ENCODE measurements at regions of chr2 and their contacts with region 1.

Region 1: DNA sequence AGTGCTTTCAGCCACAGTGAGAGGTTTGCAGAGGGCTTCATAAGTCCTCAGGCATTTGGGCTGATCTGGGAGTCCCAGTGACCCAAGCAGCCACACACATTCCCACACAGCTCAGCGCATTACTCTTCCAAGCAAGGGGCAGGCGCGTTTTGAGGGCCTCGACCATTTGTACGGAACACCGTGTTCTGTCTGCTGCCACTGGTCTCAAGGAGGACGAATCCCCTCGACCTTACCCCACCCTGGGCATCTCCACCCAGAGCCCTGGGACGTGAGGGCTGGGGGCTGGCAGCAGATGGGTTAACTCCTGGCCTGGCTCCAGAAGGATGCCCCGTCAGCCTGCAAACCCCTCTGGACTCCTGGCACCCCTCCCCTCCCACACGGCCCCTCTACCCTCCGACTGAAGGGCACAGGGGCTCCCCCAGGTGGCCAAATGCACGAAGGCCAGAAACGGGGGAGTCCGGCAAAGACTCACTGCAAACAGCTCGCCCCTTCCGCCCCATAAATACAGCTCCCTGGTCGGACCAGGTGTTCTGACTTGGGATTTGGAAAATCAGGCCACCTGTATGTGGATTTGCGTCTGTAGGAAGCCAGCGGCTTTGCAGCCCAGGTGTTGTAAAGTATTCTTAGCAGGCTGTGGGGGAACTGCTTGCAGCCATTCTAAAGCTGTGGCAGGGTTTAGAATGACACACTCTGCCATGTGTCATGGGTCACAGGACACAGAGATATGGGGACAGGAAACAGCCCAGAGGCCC is 33.6 kb upstream of the PTMA start:
- DNase-seq: peak; percentile 61 to 74 (median 71)
- ATAC-seq: peak; percentile 69
- H3K4me3 ChIP-seq: no peak overlapping the region
- H3K27ac ChIP-seq: peak overlapping the region in 2 of 4 donors; percentile 16 to 58
- H3K4me1 ChIP-seq: peaks cover 11% of the 10 kb centered on the region
- H3K27me3 ChIP-seq: no peaks in the 10 kb centered on the region
- CTCF ChIP-seq: peak; percentile 73 to 90 (median 77)
- POLR2A ChIP-seq: no peak

Region 2: GRCh38 chr2:231124838-231125568 is 549.8 kb before region 1 on chr2 and contains the start of gene HTR2B:
- intact Hi-C with region 1: no loop called
- DNase-seq: no peak
- ATAC-seq: no peak
- H3K4me3 ChIP-seq: no peak within 1 kb of the TSS
- H3K27ac ChIP-seq: no peak within 1 kb of the TSS
- H3K4me1 ChIP-seq: peaks cover 15% of the 10 kb centered on the region
- H3K27me3 ChIP-seq: no peaks in the 10 kb centered on the region
- CTCF ChIP-seq: no peak
- POLR2A ChIP-seq: no peak
- total RNA-seq, gene HTR2B: not detected

Region 3: DNA sequence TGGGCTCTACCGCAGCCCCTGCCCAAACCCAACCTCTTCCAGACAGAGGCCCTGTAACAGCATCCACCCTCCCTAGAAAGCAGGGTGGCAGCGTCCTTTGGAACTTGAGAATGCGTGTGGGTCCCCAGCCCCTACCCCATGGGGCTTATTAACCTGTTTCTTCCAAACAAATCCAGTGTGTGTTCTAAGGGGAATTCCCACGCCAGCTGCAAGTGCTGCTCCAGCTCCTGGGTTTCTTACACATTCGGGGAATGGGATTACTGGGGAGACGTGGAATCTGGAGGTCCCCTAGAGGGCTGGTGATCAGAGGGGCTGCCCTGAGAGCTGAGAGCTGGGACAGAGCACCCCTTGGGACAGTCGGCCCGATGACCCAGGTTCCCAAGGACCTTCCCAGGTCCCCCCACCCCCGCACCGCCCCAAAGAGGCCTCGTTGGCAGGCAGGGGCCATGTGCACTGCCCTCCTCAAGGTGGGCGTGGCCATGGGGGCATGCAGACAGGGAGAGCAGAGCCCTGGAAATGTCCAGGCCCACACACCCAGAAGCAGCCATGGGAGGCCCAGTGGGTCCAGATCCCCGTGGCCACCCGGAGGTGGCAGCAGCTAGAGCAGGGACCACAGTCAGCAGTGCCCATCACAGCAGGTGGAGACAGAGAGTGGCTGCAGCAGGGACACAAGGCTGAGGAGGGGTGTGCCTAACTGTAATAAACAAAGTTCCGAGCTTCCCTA is 100.9 kb before region 1 on chr2:
- intact Hi-C with region 1: no loop called
- DNase-seq: no peak
- ATAC-seq: no peak
- H3K4me3 ChIP-seq: no peak overlapping the region
- H3K27ac ChIP-seq: no peak overlapping the region
- H3K4me1 ChIP-seq: no peaks in the 10 kb centered on the region
- H3K27me3 ChIP-seq: no peaks in the 10 kb centered on the region
- CTCF ChIP-seq: no peak
- POLR2A ChIP-seq: no peak

Region 4: DNA sequence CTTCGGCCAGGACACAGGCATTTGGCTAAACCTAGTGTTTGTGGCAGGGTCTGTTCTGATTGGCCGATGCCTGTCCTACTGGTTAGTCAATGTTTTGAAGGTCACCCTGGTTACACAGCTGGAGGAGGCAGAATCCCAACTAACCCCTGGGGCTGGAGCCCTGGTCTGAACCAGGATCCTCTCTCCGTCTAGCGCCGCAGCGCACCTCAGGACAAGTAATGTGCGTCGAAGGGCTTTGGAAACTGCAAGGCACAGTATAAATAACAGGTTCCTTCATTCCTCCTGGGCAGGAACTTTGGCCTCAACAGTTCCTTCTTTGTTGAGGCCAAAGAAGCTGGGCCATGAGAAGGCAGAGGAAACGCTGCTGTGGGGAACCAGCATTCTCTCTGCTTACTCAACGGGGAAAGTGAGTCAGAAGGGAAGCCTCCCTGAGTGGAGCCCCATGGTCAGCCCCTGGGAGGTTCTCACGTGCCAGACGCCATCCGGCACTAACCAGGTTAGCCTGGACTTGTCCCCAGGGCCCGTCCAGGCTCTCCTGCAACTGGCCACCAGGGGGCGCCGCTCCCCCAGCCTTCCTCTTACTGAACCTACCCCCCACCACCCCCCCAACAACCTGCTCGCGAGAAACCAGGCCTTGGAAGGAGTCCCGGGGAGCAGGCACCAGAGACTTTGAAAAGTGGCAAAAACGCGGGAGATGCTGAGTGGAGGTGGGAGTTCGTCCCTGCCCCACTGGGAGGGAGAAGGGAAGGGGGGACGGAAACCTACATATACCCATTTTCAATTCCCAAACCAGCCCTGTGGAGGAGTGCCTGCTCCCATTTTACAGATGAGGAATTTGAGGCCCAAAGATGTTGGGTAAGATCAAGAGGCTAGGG is 62.3 kb before region 1 on chr2:
- intact Hi-C with region 1: loop called (anchors 10 kb)
- DNase-seq: peak; percentile 89 to 92 (median 92)
- ATAC-seq: peak; percentile 79
- H3K4me3 ChIP-seq: no peak overlapping the region
- H3K27ac ChIP-seq: peak overlapping the region; percentile 72 to 94 (median 80)
- H3K4me1 ChIP-seq: peaks cover 45% of the 10 kb centered on the region
- H3K27me3 ChIP-seq: no peaks in the 10 kb centered on the region
- CTCF ChIP-seq: peak; percentile 86 to 98 (median 95)
- POLR2A ChIP-seq: peak in 2 of 3 donors; percentile 32 to 43

Region 5: GRCh38 chr2:231709981-231710798 is 35.4 kb after region 1 on chr2:
- intact Hi-C with region 1: loop called (anchors 5 kb)
- DNase-seq: peak; percentile 85 to 89 (median 86)
- ATAC-seq: peak; percentile 25
- H3K4me3 ChIP-seq: peak overlapping the region; percentile 97 to 99
- H3K27ac ChIP-seq: peak overlapping the region; percentile 70 to 100 (median 98)
- H3K4me1 ChIP-seq: peaks cover 50% of the 10 kb centered on the region
- H3K27me3 ChIP-seq: no peaks in the 10 kb centered on the region
- CTCF ChIP-seq: peak; percentile 34 to 100 (median 88)
- POLR2A ChIP-seq: peak; percentile 87 to 91 (median 88)

Measured in body of pancreas (tissue), 4 donors.